Activated naive CD4-positive, alpha-beta T cell treated with anti-CD3 and anti-CD28 coated beads, Interleukin-2, amount 10 ng/mL, durations not matched to agents 7 days and 5 days (primary cell): ENCODE measurements at regions of chr2 and their contacts with region 1.

Region 1: GRCh38 chr2:209977386-209978239 is 24.8 kb upstream of the RPE start:
- DNase-seq: no peak
- H3K4me3 Mint-ChIP-seq: no peak overlapping the region
- H3K27ac Mint-ChIP-seq: no peak overlapping the region
- H3K4me1 Mint-ChIP-seq: no peaks in the 10 kb centered on the region
- H3K27me3 Mint-ChIP-seq: peaks cover 8% of the 10 kb centered on the region

Region 2: GRCh38 chr2:209942936-209943605 is 34.5 kb before region 1 on chr2:
- CTCF ChIA-PET with region 1: no interaction called
- DNase-seq: no peak
- H3K4me3 Mint-ChIP-seq: no peak overlapping the region
- H3K27ac Mint-ChIP-seq: no peak overlapping the region
- H3K4me1 Mint-ChIP-seq: no peaks in the 10 kb centered on the region
- H3K27me3 Mint-ChIP-seq: no peaks in the 10 kb centered on the region

Region 3: DNA sequence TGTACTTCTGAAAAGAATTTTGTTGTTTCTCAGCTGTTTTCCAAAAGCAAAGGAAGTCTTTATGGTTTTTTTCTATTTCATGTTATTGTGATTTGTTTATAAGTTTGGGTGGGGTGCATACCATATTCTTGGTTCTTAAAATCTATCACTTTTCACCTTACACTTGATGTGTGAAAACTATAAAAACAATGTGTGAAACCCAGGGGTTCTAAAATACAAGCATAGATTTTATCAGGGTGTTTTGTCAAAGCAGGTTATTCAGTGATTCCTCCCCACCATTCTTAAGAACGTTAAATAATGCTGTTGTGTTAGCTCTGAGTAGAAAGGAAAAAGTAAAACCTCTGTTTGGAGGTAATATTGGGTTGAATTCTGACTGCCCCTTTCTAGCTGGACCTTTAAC is 42.5 kb after region 1 on chr2:
- CTCF ChIA-PET with region 1: no interaction called
- DNase-seq: no peak
- H3K4me3 Mint-ChIP-seq: no peak overlapping the region
- H3K27ac Mint-ChIP-seq: no peak overlapping the region
- H3K4me1 Mint-ChIP-seq: no peaks in the 10 kb centered on the region
- H3K27me3 Mint-ChIP-seq: no peaks in the 10 kb centered on the region

Region 4: DNA sequence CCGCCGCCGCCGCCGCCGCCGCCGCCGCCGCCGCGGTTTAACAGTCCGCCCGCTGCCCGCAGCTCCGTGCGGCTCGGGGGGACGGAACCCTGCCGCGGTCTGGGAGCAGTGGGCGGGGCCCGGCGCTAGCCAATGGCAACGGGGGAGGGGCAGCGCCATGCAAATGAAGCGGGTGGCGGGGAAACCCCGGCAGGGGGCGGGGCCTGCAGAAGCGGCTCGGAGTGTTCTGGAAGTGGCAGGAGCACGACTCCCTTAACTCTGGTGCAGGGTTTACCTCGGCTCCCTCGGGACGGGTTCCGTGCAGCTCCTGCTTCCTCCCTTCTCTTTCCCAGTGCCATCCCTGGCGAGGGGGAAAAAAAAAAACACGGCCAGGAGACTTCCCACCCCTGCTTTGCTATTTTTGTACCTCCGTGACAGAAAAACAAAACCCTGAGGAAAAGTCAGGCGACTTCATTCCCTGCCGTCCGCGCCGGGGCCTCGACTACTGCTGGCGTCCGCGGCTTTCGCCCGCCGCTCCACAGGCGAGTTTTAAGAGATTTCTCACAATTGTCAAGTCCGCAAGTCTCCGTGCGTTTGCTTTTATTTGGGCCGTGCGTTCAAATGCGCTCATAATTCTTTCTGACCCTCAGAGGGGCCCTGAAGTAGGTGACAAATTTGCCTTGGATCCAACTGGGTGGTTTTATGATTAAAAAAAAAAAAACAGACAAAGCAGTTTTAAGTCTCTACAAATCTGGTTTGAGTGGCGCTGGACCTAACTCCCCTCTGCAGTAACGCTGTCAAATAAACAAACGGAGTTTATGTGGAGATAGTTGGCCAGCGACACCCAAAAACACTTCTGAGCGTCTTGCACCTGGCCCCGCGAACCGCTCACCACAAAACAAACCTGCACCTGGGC is 193.9 kb after region 1 on chr2 and contains the start of gene KANSL1L:
- CTCF ChIA-PET with region 1: no interaction called
- DNase-seq: peak; percentile 97
- H3K4me3 Mint-ChIP-seq: peak within 1 kb of the TSS; percentile 98
- H3K27ac Mint-ChIP-seq: peak within 1 kb of the TSS; percentile 90
- H3K4me1 Mint-ChIP-seq: peaks cover 31% of the 10 kb centered on the region
- H3K27me3 Mint-ChIP-seq: peaks cover 26% of the 10 kb centered on the region

Region 5: GRCh38 chr2:210195101-210195852 is 217.7 kb after region 1 on chr2:
- CTCF ChIA-PET with region 1: interaction called, 55 read pairs
- DNase-seq: no peak
- H3K4me3 Mint-ChIP-seq: no peak overlapping the region
- H3K27ac Mint-ChIP-seq: no peak overlapping the region
- H3K4me1 Mint-ChIP-seq: peaks cover 2% of the 10 kb centered on the region
- H3K27me3 Mint-ChIP-seq: peaks cover 7% of the 10 kb centered on the region